Mammary epithelial cell (primary cell): ENCODE measurements at regions of chrX and their contacts with region 1.

Region 1: GRCh38 chrX:131752489-131753198 is 208.8 kb downstream of the OR13H1 start:
- DNase-seq: peak; percentile 77
- H3K4me3 ChIP-seq: peak overlapping the region; percentile 40 to 54 (median 41)
- H3K27ac ChIP-seq: no peak overlapping the region
- H3K4me1 ChIP-seq: no peaks in the 10 kb centered on the region
- H3K27me3 ChIP-seq: no peaks in the 10 kb centered on the region
- CTCF ChIP-seq: peak; percentile 27 to 43

Region 2: DNA sequence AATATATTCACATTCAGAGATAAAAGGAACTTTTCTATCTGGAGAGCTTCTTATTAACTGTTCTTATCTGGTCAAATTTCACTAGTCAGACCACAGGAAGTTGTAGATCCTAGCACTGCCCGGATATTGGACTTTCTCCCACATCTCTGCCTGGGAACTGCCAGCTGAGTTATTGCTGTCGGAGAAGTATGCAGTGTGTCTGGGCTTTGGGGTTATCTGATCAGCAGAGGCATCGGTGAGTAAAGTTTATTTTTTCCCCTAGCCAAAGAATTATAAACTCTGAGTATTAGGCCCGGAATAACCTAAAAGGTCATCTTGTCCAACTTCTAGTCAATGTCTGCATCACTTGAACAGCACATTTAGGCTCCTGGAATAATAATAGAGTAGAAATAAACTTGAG is 163.6 kb before region 1 on chrX:
- CTCF ChIA-PET with region 1: no interaction called
- dilution Hi-C with region 1: no loop called
- in situ Hi-C with region 1: no loop called
- intact Hi-C with region 1: no loop called
- DNase-seq: no peak
- H3K4me3 ChIP-seq: no peak overlapping the region
- H3K27ac ChIP-seq: no peak overlapping the region
- H3K4me1 ChIP-seq: no peaks in the 10 kb centered on the region
- H3K27me3 ChIP-seq: peaks cover 3% of the 10 kb centered on the region
- CTCF ChIP-seq: no peak

Region 3: DNA sequence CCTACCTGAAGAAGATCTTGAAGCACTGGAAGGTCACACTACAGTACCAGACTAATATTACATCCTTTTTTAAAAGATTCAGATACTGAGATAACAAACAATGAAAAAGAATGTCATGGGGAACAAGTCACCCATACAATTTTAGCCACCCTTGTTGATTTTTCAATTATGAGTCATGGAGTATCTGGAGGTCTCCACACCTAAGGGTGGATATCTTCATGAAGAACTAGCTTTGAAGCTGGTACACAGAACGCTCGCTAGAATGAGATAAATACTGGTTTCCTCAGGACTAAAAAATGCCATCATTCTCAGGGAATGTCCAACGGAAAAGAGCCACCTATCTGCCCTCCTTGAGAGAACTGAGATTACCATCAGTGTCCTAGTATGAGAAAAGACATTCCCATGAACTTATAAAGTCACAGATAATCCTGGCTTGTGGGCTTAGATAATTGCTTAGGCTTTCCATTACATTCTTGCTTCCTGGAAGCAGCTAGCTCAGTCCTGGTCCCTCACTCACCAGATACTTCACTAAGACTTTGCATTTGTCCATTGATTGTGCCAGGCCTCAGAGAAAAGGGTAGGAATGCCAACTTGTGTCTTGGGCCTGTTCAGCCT is 42.1 kb before region 1 on chrX:
- CTCF ChIA-PET with region 1: no interaction called
- dilution Hi-C with region 1: no loop called
- in situ Hi-C with region 1: no loop called
- intact Hi-C with region 1: loop called (anchors 1 kb)
- DNase-seq: no peak
- H3K4me3 ChIP-seq: no peak overlapping the region
- H3K27ac ChIP-seq: no peak overlapping the region
- H3K4me1 ChIP-seq: no peaks in the 10 kb centered on the region
- H3K27me3 ChIP-seq: no peaks in the 10 kb centered on the region
- CTCF ChIP-seq: no peak

Region 4: GRCh38 chrX:131778269-131779218 is 25.9 kb after region 1 on chrX:
- CTCF ChIA-PET with region 1: no interaction called
- dilution Hi-C with region 1: no loop called
- in situ Hi-C with region 1: no loop called
- intact Hi-C with region 1: loop called (anchors 1 kb)
- DNase-seq: peak; percentile 70
- H3K4me3 ChIP-seq: peak overlapping the region; percentile 36 to 50 (median 49)
- H3K27ac ChIP-seq: peak overlapping the region; percentile 70
- H3K4me1 ChIP-seq: peaks cover 4% of the 10 kb centered on the region
- H3K27me3 ChIP-seq: no peaks in the 10 kb centered on the region
- CTCF ChIP-seq: peak; percentile 21 to 45

Region 5: GRCh38 chrX:131812836-131813825 is 60.5 kb after region 1 on chrX:
- CTCF ChIA-PET with region 1: interaction called, 7 read pairs
- dilution Hi-C with region 1: no loop called
- in situ Hi-C with region 1: no loop called
- intact Hi-C with region 1: loop called (anchors 2 kb)
- DNase-seq: peak; percentile 79
- H3K4me3 ChIP-seq: peak overlapping the region; percentile 24 to 43 (median 39)
- H3K27ac ChIP-seq: no peak overlapping the region
- H3K4me1 ChIP-seq: no peaks in the 10 kb centered on the region
- H3K27me3 ChIP-seq: no peaks in the 10 kb centered on the region
- CTCF ChIP-seq: peak; percentile 18 to 49